ENCODE measurements at regions of chr10 and their contacts with region 1.

Region 1: GRCh38 chr10:80498833-80499741 is 38.6 kb upstream of the SH2D4B start:
- DNase-seq: no peak
- ATAC-seq: peak; percentile 34
- H3K4me3 ChIP-seq: no peak overlapping the region
- H3K27ac ChIP-seq: peak overlapping the region; percentile 39
- H3K4me1 ChIP-seq: peaks cover 45% of the 10 kb centered on the region
- H3K27me3 ChIP-seq: no peaks in the 10 kb centered on the region
- CTCF ChIP-seq: no peak
- EP300 ChIP-seq: no peak
- POLR2A ChIP-seq: 0 out of 2 replicates have a peak, but pooled peaks have one; percentile 15
- RAD21 ChIP-seq: no peak

Region 2: GRCh38 chr10:80382989-80383388 is 116.1 kb before region 1 on chr10:
- CTCF ChIA-PET with region 1: interaction called, 3 read pairs
- POLR2A ChIA-PET with region 1: no interaction called
- RAD21 ChIA-PET with region 1: interaction called, 3 read pairs
- SMC1A ChIA-PET with region 1: interaction called, 17 read pairs
- in situ Hi-C with region 1: no loop called
- intact Hi-C with region 1: loop called (anchors 5 kb)
- DNase-seq: peak; percentile 19
- ATAC-seq: peak; percentile 65
- H3K4me3 ChIP-seq: no peak overlapping the region
- H3K27ac ChIP-seq: no peak overlapping the region
- H3K4me1 ChIP-seq: no peaks in the 10 kb centered on the region
- H3K27me3 ChIP-seq: peaks cover 0 to 3% of the 10 kb centered on the region in 2 experiments; a peak in 1 of 4 replicates
- CTCF ChIP-seq: peak; percentile 52 to 68 (median 66)
- EP300 ChIP-seq: no peak
- POLR2A ChIP-seq: no peak
- RAD21 ChIP-seq: peak; percentile 72

Region 3: DNA sequence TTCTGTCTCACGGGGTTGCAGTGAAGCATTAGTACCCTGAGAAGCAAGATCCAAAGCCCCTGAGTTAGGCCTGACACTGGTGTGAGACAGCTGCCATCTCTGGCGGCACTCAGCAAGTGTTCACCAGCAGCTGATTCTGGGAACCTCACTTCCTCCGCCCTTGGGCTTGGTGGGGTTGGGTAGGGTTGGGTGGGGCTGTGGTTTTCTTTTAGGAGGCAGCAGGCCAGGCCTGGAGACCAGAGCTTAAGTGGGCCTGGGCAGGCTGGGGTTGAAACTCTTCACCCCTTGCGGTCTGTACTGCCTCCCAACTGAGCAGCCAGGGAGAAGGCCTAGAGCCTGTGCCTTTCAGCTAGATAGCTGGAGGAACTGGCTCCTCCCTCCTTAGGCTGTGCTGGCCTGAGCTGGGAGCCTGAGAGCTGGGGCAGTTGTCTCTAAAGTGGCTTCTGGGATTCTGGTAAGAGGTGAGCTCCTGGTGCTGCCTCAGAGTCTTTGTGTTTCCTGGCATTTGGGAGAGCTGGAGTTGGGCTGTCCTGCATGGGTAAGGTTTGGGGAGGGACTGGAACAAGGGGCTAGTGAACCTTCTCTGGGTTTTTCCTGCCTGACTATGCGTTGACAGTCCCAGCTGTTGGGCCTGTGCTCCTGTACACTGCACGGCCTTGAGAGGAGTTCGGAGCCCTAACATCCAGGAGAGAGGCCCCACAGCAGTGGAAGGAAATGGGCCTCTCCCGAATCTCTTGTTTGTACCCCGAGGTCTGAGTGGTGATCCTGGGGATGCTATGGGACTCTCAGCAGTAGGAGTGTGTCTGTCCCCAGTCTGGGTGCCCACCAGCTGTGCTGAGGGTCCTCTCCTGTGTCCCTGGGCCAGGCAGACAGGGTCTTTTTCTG is 39.8 kb before region 1 on chr10:
- CTCF ChIA-PET with region 1: interaction called, 402 read pairs
- POLR2A ChIA-PET with region 1: interaction called, 60 read pairs
- RAD21 ChIA-PET with region 1: interaction called, 412 read pairs
- SMC1A ChIA-PET with region 1: interaction called, 1,038 read pairs
- in situ Hi-C with region 1: no loop called
- intact Hi-C with region 1: loop called (anchors 5 kb)
- DNase-seq: peak; percentile 73
- ATAC-seq: peak; percentile 59
- H3K4me3 ChIP-seq: peak overlapping the region; percentile 92; the same call in 1 of the 2 replicates
- H3K27ac ChIP-seq: peak overlapping the region; percentile 45
- H3K4me1 ChIP-seq: peaks cover 79% of the 10 kb centered on the region
- H3K27me3 ChIP-seq: no peaks in the 10 kb centered on the region
- CTCF ChIP-seq: peak; percentile 11 to 15 (median 14); a peak in 2 of 6 replicates
- EP300 ChIP-seq: no peak
- POLR2A ChIP-seq: peak; percentile 43; the same call in 1 of the 2 replicates
- RAD21 ChIP-seq: no peak

Region 4: DNA sequence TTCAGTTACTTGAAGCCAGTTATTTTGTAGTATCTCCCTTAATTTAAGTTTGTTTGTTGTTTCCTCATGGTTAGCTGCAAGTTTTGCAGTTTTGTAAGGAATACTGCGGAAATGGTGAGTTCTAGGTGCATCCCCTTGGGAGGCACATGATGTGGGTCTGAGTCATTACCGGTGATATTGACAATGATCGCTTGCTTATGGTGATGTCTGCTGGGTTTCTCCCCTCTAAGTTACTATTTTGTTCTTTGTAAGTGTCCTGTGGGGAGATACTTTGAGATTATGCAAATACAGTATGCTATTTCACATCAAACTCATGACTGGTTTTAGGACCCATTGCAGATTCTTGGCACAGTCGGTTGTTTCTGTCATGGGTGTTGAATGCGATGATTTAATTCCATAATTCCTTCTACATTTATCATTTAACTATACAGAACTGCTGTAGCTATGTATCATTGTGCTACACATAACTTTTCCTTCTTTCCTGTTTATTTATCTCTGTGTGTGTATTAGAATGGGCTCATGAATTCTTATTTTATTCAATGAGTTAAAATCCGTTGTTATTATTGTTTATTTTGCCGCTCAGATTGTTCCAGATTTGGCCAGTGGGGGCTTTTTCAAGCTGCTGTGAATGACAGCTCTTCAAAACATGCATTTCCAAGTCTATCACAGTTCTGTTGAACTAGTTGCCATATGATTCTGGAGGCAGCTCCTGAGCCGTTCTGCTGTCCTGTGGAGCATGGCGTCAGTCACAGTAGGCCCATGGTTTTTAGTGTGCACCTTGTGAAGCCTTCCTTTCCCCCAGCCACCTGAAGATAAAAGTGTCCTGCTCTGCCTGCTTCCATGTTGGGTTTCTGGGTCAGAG is 26.6 kb before region 1 on chr10:
- CTCF ChIA-PET with region 1: interaction called, 402 read pairs
- POLR2A ChIA-PET with region 1: interaction called, 35 read pairs
- RAD21 ChIA-PET with region 1: interaction called, 412 read pairs
- SMC1A ChIA-PET with region 1: interaction called, 1,038 read pairs
- in situ Hi-C with region 1: no loop called
- intact Hi-C with region 1: loop called (anchors 2 kb)
- DNase-seq: peak; percentile 92
- ATAC-seq: peak; percentile 88
- H3K4me3 ChIP-seq: peak overlapping the region; percentile 35
- H3K27ac ChIP-seq: peak overlapping the region; percentile 87
- H3K4me1 ChIP-seq: peaks cover 65% of the 10 kb centered on the region
- H3K27me3 ChIP-seq: no peaks in the 10 kb centered on the region
- CTCF ChIP-seq: no peak
- EP300 ChIP-seq: peak; percentile 66 to 67; a peak in 2 of 4 replicates
- POLR2A ChIP-seq: no peak
- RAD21 ChIP-seq: no peak

Region 5: DNA sequence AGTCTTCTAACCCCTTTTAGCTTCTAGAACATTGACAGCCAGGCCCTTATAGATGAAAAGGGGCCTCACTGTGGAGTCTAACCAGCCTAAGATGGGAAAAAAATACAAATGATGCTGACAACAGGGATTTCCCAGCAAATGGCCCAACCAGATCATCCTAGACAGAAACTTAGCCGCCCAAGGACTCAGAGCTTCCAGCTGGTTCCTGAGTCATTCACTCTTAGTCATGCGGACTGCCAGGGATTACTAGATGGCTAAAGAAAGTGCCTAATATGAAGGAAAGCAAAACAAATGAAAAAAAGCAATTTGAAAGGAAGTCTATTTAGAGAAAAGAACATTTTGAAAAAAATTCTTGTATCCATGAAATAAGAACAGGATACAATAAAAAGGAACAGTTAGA is 21.3 kb before region 1 on chr10:
- CTCF ChIA-PET with region 1: interaction called, 402 read pairs
- POLR2A ChIA-PET with region 1: interaction called, 35 read pairs
- RAD21 ChIA-PET with region 1: interaction called, 412 read pairs
- SMC1A ChIA-PET with region 1: interaction called, 1,038 read pairs
- in situ Hi-C with region 1: no loop called
- intact Hi-C with region 1: loop called (anchors 2 kb)
- DNase-seq: no peak
- ATAC-seq: no peak
- H3K4me3 ChIP-seq: no peak overlapping the region
- H3K27ac ChIP-seq: no peak overlapping the region
- H3K4me1 ChIP-seq: peaks cover 22% of the 10 kb centered on the region
- H3K27me3 ChIP-seq: no peaks in the 10 kb centered on the region
- CTCF ChIP-seq: no peak
- EP300 ChIP-seq: no peak
- POLR2A ChIP-seq: no peak
- RAD21 ChIP-seq: no peak

Region 6: GRCh38 chr10:80681142-80681541 is 182.1 kb after region 1 on chr10:
- CTCF ChIA-PET with region 1: no interaction called
- POLR2A ChIA-PET with region 1: no interaction called
- RAD21 ChIA-PET with region 1: no interaction called
- SMC1A ChIA-PET with region 1: no interaction called
- in situ Hi-C with region 1: no loop called
- intact Hi-C with region 1: no loop called
- DNase-seq: no peak
- ATAC-seq: no peak
- H3K4me3 ChIP-seq: no peak overlapping the region
- H3K27ac ChIP-seq: no peak overlapping the region
- H3K4me1 ChIP-seq: no peaks in the 10 kb centered on the region
- H3K27me3 ChIP-seq: no peaks in the 10 kb centered on the region
- CTCF ChIP-seq: no peak
- EP300 ChIP-seq: no peak
- POLR2A ChIP-seq: no peak
- RAD21 ChIP-seq: no peak

Region 7: GRCh38 chr10:80753612-80754011 is 254.5 kb after region 1 on chr10:
- CTCF ChIA-PET with region 1: no interaction called
- POLR2A ChIA-PET with region 1: no interaction called
- RAD21 ChIA-PET with region 1: no interaction called
- SMC1A ChIA-PET with region 1: no interaction called
- in situ Hi-C with region 1: no loop called
- intact Hi-C with region 1: no loop called
- DNase-seq: no peak
- ATAC-seq: no peak
- H3K4me3 ChIP-seq: no peak overlapping the region
- H3K27ac ChIP-seq: no peak overlapping the region
- H3K4me1 ChIP-seq: no peaks in the 10 kb centered on the region
- H3K27me3 ChIP-seq: no peaks in the 10 kb centered on the region
- CTCF ChIP-seq: no peak
- EP300 ChIP-seq: no peak
- POLR2A ChIP-seq: no peak
- RAD21 ChIP-seq: no peak

Measured in GM12878 (cell line).